Common myeloid progenitor, CD34-positive (primary cell): ENCODE measurements at regions of chr1 and their contacts with region 1.

Region 1: DNA sequence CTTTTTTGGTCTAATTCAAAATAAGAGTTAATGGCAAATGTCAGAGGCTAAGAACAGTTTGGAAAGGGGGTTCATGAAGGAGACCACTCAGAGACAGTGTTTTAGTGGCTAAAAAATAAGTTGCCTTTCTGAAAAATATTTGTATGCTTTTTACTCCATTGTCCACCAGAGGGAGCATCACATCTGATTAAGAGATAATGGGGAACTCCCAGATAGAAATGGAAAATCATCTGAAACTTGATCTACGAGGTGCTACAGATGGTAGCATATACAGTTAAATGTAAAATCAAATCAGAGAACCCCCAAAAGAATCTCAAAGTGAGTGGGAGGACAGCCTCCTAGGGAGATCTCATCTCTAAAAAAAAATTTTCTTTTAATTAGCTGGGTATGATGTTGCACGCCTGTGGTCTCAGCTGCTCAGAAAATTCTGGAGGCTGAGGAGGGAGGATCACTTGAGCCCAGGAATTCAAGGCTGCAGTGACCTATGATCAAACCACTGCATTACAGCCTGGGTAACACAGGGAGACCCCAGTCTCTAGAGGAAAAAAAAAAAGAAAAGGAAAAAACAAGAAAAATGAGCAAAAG is 9.7 kb downstream of the SMYD3 start:
- DNase-seq: peak; percentile 81 to 91 (median 88)
- H3K4me3 ChIP-seq: no peak overlapping the region
- H3K27ac ChIP-seq: no peak overlapping the region
- H3K4me1 ChIP-seq: peaks cover 2 to 5% (median 3%) of the 10 kb centered on the region in 4 experiments
- H3K27me3 ChIP-seq: no peaks in the 10 kb centered on the region

Region 2: GRCh38 chr1:246476771-246477170 is 20.7 kb before region 1 on chr1:
- CTCF ChIA-PET with region 1: interaction called, 14 read pairs
- POLR2A ChIA-PET with region 1: no interaction called
- DNase-seq: no peak
- H3K4me3 ChIP-seq: no peak overlapping the region
- H3K27ac ChIP-seq: no peak overlapping the region
- H3K4me1 ChIP-seq: peaks cover 0 to 2% (median 0%) of the 10 kb centered on the region in 4 experiments
- H3K27me3 ChIP-seq: no peaks in the 10 kb centered on the region